ENCODE measurements at regions of chr10 and their contacts with region 1.

Region 1: DNA sequence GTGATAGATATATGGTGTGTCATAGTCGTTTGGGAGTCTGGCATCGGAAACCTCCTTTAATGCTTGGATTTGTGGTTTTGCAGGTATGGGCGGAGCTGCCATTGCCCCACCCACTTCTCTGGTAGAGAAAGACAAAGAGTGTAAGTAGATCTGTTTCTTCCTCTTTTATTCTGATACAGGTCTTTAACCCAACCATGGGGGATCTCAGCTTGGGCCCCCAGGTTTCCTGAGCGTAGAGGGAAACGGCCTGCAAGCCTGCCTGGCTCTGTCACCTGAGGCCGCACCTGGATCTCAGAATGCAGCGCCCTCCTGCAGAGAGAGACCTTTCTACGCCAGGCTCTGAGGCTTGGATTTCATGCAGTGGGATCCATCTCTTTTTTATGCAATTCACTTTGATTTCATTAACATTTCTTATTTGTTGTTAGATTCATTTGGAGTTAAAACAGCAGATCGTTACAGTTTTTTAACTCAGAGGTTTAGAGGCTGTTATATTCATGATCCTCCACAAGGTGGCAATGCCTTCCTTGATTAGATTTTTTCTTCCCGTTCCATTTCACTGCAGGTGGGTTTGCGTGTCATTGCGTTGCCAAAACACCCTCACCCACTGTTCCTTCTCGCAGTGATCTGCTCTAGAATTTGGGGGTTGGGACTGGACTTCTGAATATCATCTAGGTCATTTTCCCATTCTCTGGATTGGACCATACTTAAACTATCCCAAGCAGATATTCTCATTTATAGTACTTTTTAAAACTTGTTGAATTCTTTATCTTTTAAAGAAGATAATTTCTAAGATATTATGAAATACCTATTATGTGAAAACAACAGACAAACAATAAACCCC is 20.0 kb downstream of the RBM17 start:
- DNase-seq: peak in 1 of 4 donors; percentile 21
- ATAC-seq: no peak
- H3K4me3 ChIP-seq: no peak overlapping the region
- H3K27ac ChIP-seq: no peak overlapping the region
- H3K4me1 ChIP-seq: no peaks in the 10 kb centered on the region
- H3K27me3 ChIP-seq: no peaks in the 10 kb centered on the region
- CTCF ChIP-seq: peak; percentile 48 to 85 (median 76)
- POLR2A ChIP-seq: no peak

Region 2: GRCh38 chr10:5779730-5780129 is 329.1 kb before region 1 on chr10:
- intact Hi-C with region 1: no loop called
- DNase-seq: no peak
- ATAC-seq: no peak
- H3K4me3 ChIP-seq: no peak overlapping the region
- H3K27ac ChIP-seq: no peak overlapping the region
- H3K4me1 ChIP-seq: peaks cover 28% of the 10 kb centered on the region
- H3K27me3 ChIP-seq: no peaks in the 10 kb centered on the region
- CTCF ChIP-seq: no peak
- POLR2A ChIP-seq: no peak

Region 3: GRCh38 chr10:6401562-6402348 is 292.9 kb after region 1 on chr10:
- intact Hi-C with region 1: loop called (anchors 5 kb)
- DNase-seq: peak; percentile 79 to 91 (median 86)
- ATAC-seq: peak; percentile 97
- H3K4me3 ChIP-seq: no peak overlapping the region
- H3K27ac ChIP-seq: peak overlapping the region in 3 of 4 donors; percentile 49 to 74 (median 60)
- H3K4me1 ChIP-seq: peaks cover 7% of the 10 kb centered on the region
- H3K27me3 ChIP-seq: no peaks in the 10 kb centered on the region
- CTCF ChIP-seq: peak; percentile 27 to 95 (median 94)
- POLR2A ChIP-seq: no peak

Region 4: GRCh38 chr10:6542999-6543430 is 434.2 kb after region 1 on chr10:
- intact Hi-C with region 1: no loop called
- DNase-seq: no peak
- ATAC-seq: no peak
- H3K4me3 ChIP-seq: no peak overlapping the region
- H3K27ac ChIP-seq: no peak overlapping the region
- H3K4me1 ChIP-seq: no peaks in the 10 kb centered on the region
- H3K27me3 ChIP-seq: no peaks in the 10 kb centered on the region
- CTCF ChIP-seq: no peak
- POLR2A ChIP-seq: no peak